ENCODE measurements at regions of chr16 and their contacts with region 1.

Region 1: DNA sequence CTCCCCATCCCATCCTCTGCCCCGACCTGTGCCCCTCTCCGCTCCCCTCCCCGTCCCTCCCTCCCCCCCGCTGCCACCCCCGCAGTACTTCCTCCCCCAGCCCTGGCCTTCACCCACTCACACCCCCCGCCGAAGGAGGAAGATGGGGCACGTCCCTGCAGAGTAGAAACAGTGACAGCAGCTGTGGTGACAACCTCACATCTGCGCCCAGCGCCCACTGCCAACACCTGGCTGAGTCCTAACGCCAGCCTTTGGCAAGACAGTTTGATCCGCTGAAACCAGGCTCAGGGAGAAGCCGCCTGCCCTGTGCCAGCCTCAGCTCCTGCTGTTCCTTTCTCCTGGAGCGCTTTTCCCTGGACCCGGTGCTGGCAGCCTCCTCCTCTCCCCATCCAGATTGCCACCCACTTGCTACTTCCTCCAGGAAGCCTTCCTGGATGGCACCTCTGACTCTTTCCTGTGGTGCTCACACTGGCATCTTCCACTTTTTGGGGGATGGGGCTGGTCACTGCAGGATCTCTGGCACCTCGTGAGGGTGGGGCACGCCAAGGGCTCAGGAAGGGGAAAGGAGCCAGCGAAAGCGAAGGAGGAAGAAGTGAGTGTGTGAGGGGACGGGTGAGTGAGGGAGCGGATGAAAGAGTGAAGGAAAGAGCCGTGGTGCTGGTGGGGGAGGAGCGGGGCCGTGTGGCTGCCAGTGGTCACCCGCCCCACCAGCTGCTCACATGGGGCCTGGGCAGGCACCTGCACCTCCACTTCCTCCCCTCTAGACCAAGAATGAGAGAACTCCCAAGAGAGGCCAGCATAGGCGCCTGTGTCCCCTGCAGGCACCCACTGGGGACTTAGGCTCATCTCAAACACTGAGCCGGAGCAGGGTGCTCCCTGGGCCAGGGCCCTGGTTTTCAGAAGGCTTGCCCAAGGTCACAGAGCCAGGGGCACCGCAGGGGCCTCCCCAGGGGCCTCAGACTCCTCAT is 27.0 kb downstream of the ZFPM1 start:
- DNase-seq: peak in 6 of 9 donors; percentile 35 to 57 (median 51)
- ATAC-seq: peak; percentile 49
- H3K4me3 ChIP-seq: peak overlapping the region; percentile 17
- H3K4me3 Mint-ChIP-seq: peak overlapping the region in 9 of 10 donors; percentile 40 to 77 (median 66)
- H3K27ac ChIP-seq: no peak overlapping the region
- H3K27ac Mint-ChIP-seq: peak overlapping the region in 6 of 9 donors; percentile 28 to 95 (median 74)
- H3K4me1 ChIP-seq: peaks cover 26 to 40% of the 10 kb centered on the region in 2 donors
- H3K4me1 Mint-ChIP-seq: peaks cover 22 to 59% (median 43%) of the 10 kb centered on the region in 7 donors
- H3K27me3 ChIP-seq: no peaks in the 10 kb centered on the region
- H3K27me3 Mint-ChIP-seq: peaks cover 0 to 6% (median 0%) of the 10 kb centered on the region in 5 donors

Region 2: GRCh38 chr16:88468275-88469141 is 11.6 kb before region 1 on chr16:
- CTCF ChIA-PET with region 1: no interaction called
- POLR2A ChIA-PET with region 1: interaction called, 5 read pairs
- intact Hi-C with region 1: loop called in 1 of 2 experiments (anchors 1 kb)
- DNase-seq: no peak
- ATAC-seq: peak; percentile 33
- H3K4me3 ChIP-seq: no peak overlapping the region
- H3K4me3 Mint-ChIP-seq: peak overlapping the region in 4 of 10 donors; percentile 6 to 74 (median 35)
- H3K27ac ChIP-seq: peak overlapping the region; percentile 72
- H3K27ac Mint-ChIP-seq: peak overlapping the region in 8 of 9 donors; percentile 40 to 99 (median 92)
- H3K4me1 ChIP-seq: peaks cover 49 to 73% of the 10 kb centered on the region in 2 donors
- H3K4me1 Mint-ChIP-seq: peaks cover 20 to 80% (median 55%) of the 10 kb centered on the region in 7 donors
- H3K27me3 ChIP-seq: no peaks in the 10 kb centered on the region
- H3K27me3 Mint-ChIP-seq: no peaks in the 10 kb centered on the region

Region 3: GRCh38 chr16:88527186-88527936 is 47.3 kb after region 1 on chr16:
- CTCF ChIA-PET with region 1: no interaction called
- POLR2A ChIA-PET with region 1: no interaction called
- intact Hi-C with region 1: loop called in 1 of 2 experiments (anchors 5 kb)
- DNase-seq: peak in 8 of 9 donors; percentile 49 to 78 (median 62)
- ATAC-seq: peak; percentile 75
- H3K4me3 ChIP-seq: no peak overlapping the region
- H3K4me3 Mint-ChIP-seq: no peak overlapping the region
- H3K27ac ChIP-seq: no peak overlapping the region
- H3K27ac Mint-ChIP-seq: no peak overlapping the region
- H3K4me1 ChIP-seq: peaks cover 0 to 7% of the 10 kb centered on the region in 2 donors
- H3K4me1 Mint-ChIP-seq: peaks cover 0 to 13% (median 5%) of the 10 kb centered on the region in 7 donors
- H3K27me3 ChIP-seq: no peaks in the 10 kb centered on the region
- H3K27me3 Mint-ChIP-seq: no peaks in the 10 kb centered on the region